ENCODE measurements at regions of chr9 and their contacts with region 1.

Region 1: DNA sequence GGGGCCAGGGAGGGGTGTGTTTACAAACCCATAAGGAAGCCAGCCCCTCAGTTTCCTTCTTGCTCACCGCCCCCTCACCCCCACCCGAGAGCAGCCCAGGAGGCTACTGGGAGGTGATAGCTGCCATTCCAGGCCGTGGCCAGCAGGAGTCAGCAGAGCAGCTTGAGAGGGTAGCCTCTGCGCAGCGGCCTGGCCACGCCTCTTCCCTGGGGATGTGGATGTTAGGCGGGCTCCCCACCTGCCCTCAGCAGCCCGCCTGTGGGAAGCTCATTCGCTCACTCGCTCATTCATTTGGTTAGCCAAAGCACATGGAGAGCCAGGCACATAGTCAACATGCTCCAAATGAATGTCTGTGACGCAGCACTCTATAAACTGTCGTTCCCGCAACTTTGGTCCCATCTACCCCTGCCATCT is 6.1 kb upstream of the DPM2 start:
- DNase-seq: peak; percentile 96
- ATAC-seq: peak; percentile 84
- H3K4me3 Mint-ChIP-seq: no peak overlapping the region
- H3K27ac Mint-ChIP-seq: peak overlapping the region; percentile 58
- H3K4me1 Mint-ChIP-seq: peaks cover 22% of the 10 kb centered on the region
- H3K27me3 Mint-ChIP-seq: no peaks in the 10 kb centered on the region
- CTCF ChIP-seq: peak; percentile 84

Region 2: GRCh38 chr9:127916665-127917613 is 26.8 kb before region 1 on chr9 and contains the start of gene ST6GALNAC4:
- CTCF ChIA-PET with region 1: interaction called, 20 read pairs
- POLR2A ChIA-PET with region 1: no interaction called
- DNase-seq: peak; percentile 96
- ATAC-seq: peak; percentile 92
- H3K4me3 Mint-ChIP-seq: peak within 1 kb of the TSS; percentile 74
- H3K27ac Mint-ChIP-seq: peak within 1 kb of the TSS; percentile 60; the same call in 1 of the 2 replicates
- H3K4me1 Mint-ChIP-seq: peaks cover 19% of the 10 kb centered on the region
- H3K27me3 Mint-ChIP-seq: peaks cover 7% of the 10 kb centered on the region
- CTCF ChIP-seq: no peak
- total RNA-seq, gene ST6GALNAC4: 25.1 to 25.7 TPM (median 25.4 TPM) in 3 replicates

Region 3: GRCh38 chr9:127955294-127956035 is 11.7 kb after region 1 on chr9:
- CTCF ChIA-PET with region 1: interaction called, 121 read pairs
- POLR2A ChIA-PET with region 1: no interaction called
- DNase-seq: peak; percentile 76
- ATAC-seq: peak; percentile 96
- H3K4me3 Mint-ChIP-seq: no peak overlapping the region
- H3K27ac Mint-ChIP-seq: peak overlapping the region; percentile 80
- H3K4me1 Mint-ChIP-seq: peaks cover 18% of the 10 kb centered on the region
- H3K27me3 Mint-ChIP-seq: no peaks in the 10 kb centered on the region
- CTCF ChIP-seq: peak; percentile 32; the same call in 1 of the 2 replicates

Region 4: DNA sequence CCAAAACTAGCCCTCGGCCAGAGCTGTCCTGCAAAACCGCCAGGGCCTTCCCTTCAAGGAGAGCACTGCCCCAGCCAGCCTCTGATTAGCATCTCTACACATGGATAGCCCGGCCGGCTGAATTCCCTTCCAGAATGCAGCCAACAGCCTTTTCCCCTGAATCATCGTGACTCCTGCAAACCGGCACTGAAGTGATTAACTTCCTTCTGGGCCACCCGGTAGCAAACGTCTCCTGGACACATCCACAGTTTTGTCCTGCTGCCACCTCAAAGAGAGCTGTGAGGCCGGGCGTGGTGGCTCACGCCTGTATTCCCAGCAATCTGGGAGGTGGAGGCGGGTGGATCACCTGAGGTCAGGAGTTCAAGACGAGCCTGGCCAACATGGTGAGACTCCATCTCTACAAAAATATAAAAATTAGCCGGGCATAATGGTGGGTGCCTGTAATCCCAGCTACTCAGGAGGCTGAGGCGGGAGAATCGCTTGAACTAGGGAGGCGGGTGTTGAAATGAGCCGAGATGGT is 58.1 kb after region 1 on chr9:
- CTCF ChIA-PET with region 1: interaction called, 12 read pairs
- POLR2A ChIA-PET with region 1: no interaction called
- DNase-seq: peak; percentile 46
- ATAC-seq: peak; percentile 92
- H3K4me3 Mint-ChIP-seq: no peak overlapping the region
- H3K27ac Mint-ChIP-seq: peak overlapping the region; percentile 85; the same call in 1 of the 2 replicates
- H3K4me1 Mint-ChIP-seq: peaks cover 11% of the 10 kb centered on the region
- H3K27me3 Mint-ChIP-seq: no peaks in the 10 kb centered on the region
- CTCF ChIP-seq: no peak

Region 5: DNA sequence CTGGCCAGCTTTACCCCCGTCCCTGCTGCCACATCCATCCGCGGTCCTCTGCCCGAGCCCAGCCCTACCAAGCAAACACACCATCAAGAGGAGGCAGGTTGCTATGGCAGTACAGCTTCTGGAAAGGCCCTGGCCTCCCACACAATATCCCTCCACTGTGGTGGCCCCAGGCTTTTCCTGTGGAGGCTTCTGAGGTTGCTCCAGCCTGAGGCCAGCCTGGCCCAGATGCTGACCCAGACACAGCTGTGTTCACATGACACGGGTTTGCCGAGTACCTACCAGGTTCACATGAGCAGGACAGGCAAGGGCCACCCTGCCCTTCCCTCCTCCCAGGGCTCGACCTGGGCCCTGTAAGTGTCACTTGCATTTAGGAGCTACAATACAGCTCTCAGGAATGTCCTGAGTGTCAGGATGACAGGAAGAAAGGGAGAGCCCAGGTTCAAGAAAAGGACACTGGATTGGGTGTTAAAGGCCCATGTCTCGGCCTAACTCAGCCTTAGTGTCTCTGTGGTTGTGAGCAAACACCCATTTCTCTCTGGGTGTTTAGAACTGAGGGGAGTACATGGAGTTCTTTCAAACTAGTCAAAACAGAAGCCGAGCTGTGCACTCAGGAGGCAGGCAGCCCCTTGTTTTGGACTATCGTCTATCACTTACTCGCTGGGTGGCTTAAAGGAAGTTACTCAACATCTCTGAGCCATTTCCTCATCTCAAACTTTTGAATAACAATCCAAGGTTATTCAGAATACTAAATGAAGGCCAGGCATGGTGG is 83.2 kb after region 1 on chr9:
- CTCF ChIA-PET with region 1: interaction called, 179 read pairs
- POLR2A ChIA-PET with region 1: interaction called, 4 read pairs
- DNase-seq: no peak
- ATAC-seq: no peak; the same call in 1 of the 2 replicates
- H3K4me3 Mint-ChIP-seq: no peak overlapping the region
- H3K27ac Mint-ChIP-seq: peak overlapping the region; percentile 38; the same call in 1 of the 2 replicates
- H3K4me1 Mint-ChIP-seq: peaks cover 4% of the 10 kb centered on the region
- H3K27me3 Mint-ChIP-seq: no peaks in the 10 kb centered on the region
- CTCF ChIP-seq: no peak

Region 6: DNA sequence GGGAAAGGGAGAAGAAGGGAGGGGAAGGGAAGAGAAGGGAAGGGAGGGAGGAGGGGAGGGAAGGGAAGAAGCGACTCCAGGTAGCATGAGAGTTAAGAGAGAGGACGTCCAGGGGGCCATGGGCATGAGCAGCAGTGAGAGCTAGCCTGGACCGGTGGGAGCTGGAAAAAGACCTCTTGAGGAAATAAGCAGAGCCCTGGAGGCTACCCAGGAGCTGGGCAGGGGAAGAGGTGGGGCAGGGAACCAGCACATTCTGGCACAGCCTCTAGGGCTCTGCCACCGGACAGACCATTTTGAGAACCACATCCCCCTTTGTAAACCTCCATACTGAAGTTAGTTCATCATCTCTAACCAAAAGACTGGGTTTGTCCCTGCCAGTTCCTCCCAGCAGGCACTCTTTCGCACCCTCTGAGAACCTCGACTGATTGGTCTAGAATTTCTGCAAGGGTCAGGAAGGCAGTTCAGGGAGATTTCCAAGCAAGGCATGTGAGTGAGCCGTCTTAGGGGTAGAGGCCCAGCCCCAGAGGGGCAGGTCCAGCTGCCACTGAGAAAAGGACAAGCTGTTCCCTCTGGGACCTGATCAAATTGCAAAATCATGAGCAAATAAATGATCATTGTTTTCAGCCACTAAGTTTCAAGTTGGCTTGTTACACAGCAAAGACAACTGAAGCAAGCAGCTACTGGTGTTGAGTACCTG is 111.8 kb after region 1 on chr9:
- CTCF ChIA-PET with region 1: interaction called, 34 read pairs
- POLR2A ChIA-PET with region 1: no interaction called
- DNase-seq: no peak
- ATAC-seq: peak; percentile 23; the same call in 1 of the 2 replicates
- H3K4me3 Mint-ChIP-seq: no peak overlapping the region
- H3K27ac Mint-ChIP-seq: peak overlapping the region; percentile 57
- H3K4me1 Mint-ChIP-seq: peaks cover 31% of the 10 kb centered on the region
- H3K27me3 Mint-ChIP-seq: no peaks in the 10 kb centered on the region
- CTCF ChIP-seq: no peak

Region 7: GRCh38 chr9:128127990-128128835 is 184.5 kb after region 1 on chr9:
- CTCF ChIA-PET with region 1: interaction called, 11 read pairs
- POLR2A ChIA-PET with region 1: no interaction called
- DNase-seq: peak; percentile 80
- ATAC-seq: peak; percentile 80
- H3K4me3 Mint-ChIP-seq: peak overlapping the region; percentile 94
- H3K27ac Mint-ChIP-seq: peak overlapping the region; percentile 97
- H3K4me1 Mint-ChIP-seq: peaks cover 17% of the 10 kb centered on the region
- H3K27me3 Mint-ChIP-seq: peaks cover 19% of the 10 kb centered on the region
- CTCF ChIP-seq: no peak